H1 (cell line): ENCODE measurements at regions of chr11 and their contacts with region 1.

Region 1: DNA sequence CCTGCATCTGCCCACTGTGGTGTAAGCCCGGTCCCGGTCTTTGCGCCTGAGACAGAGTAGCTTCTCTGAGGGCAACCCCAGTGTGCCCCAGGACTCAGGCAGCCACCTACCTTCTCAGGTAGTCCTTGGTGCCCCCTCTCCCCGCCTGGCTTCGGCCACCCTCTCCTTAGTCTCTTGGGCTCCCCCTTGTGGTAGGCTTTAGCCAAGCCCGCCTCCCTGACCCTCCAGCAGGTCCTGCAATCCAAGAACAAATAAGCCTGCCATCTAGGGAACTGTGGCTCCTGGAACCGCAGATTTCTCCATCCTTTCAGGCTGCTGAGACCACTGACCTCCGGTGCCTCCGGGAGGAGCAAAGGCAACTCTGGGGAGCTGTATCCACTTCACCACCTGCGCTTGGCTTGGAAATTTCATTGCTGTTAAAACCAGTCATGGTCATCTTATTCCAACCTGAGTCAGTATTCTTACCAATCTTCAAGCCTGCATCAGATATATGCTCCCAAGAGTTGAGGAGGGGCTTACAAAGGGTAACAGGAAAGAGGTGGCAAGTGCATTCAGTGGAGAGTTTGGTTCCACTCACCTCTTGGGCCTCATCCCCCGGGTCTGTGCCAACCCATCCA is 52.8 kb upstream of the TENM4 start:
- DNase-seq: peak; percentile 92 to 98
- H3K4me3 ChIP-seq: no peak overlapping the region
- H3K27ac ChIP-seq: no peak overlapping the region
- H3K4me1 ChIP-seq: peaks cover 0 to 2% (median 0%) of the 10 kb centered on the region in 4 experiments; a peak in 1 of 7 replicates
- H3K27me3 ChIP-seq: no peaks in the 10 kb centered on the region
- CTCF ChIP-seq: peak; percentile 88 to 98 (median 96)
- EP300 ChIP-seq: peak in 1 of 2 experiments; percentile 28; a peak in 1 of 3 replicates
- POLR2A ChIP-seq: no peak
- RAD21 ChIP-seq: peak; percentile 91 to 97

Region 2: GRCh38 chr11:79440441-79441194 is 53.0 kb before region 1 on chr11 and contains the start of gene TENM4:
- CTCF ChIA-PET with region 1: interaction called, 36 read pairs
- POLR2A ChIA-PET with region 1: interaction called, 4 read pairs
- DNase-seq: peak in 1 of 2 experiments; percentile 69
- H3K4me3 ChIP-seq: peak within 1 kb of the TSS; percentile 56 to 80 (median 63)
- H3K27ac ChIP-seq: no peak within 1 kb of the TSS
- H3K4me1 ChIP-seq: peaks cover 0 to 15% (median 10%) of the 10 kb centered on the region in 4 experiments; a peak in 6 of 7 replicates
- H3K27me3 ChIP-seq: peaks cover 12 to 64% (median 54%) of the 10 kb centered on the region in 4 experiments
- CTCF ChIP-seq: peak; percentile 46 to 61 (median 56)
- EP300 ChIP-seq: no peak
- POLR2A ChIP-seq: no peak
- RAD21 ChIP-seq: peak in 1 of 2 experiments; percentile 41; a peak in 2 of 4 replicates
- total RNA-seq, gene TENM4: 7.2 and 8.8 TPM in 2 replicates

Region 3: DNA sequence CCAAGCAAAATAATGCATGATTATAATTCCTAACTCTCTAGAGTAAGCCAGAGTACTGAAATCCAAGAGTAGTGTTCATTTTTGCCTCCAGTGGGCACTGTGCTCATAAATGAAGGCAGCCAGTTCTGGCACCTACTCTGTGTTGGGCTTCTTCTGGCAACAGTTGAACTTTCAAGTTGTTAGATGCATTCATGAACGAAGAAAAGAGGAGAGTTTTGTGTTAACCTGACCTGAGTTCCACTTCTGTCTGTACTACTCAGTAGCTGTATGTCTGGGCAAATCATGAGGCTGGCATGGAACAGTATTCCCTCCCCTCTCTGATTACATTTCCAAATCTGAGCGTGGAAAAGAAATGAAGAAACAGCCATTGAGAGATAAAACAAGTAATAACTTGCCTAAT is 32.5 kb before region 1 on chr11:
- CTCF ChIA-PET with region 1: interaction called, 136 read pairs
- POLR2A ChIA-PET with region 1: interaction called, 4 read pairs
- DNase-seq: no peak
- H3K4me3 ChIP-seq: no peak overlapping the region
- H3K27ac ChIP-seq: no peak overlapping the region
- H3K4me1 ChIP-seq: no peaks in the 10 kb centered on the region
- H3K27me3 ChIP-seq: no peaks in the 10 kb centered on the region
- CTCF ChIP-seq: peak in 2 of 3 experiments; percentile 71 to 76; a peak in 3 of 4 replicates
- EP300 ChIP-seq: no peak
- POLR2A ChIP-seq: no peak
- RAD21 ChIP-seq: peak; percentile 70 to 87

Region 4: DNA sequence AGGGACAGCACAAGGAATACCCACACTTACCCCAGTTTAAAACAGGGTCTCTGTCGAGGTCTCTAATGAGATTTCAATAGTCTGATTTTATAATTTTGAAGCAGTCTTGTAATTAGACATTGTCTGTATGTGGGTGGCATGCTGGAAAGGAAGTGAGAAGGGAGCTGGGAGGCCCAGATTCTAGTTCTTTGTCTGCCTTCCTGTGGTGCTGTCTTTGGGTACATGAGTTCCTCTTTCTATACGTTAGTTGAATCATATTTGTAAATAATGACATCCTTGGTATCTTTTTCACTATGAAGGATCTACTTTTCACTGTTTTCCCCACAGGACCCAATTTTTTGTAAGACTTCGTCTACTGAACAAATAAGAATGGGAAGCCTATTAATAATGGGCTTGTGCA is 10.9 kb before region 1 on chr11:
- CTCF ChIA-PET with region 1: interaction called, 23 read pairs
- POLR2A ChIA-PET with region 1: no interaction called
- DNase-seq: no peak
- H3K4me3 ChIP-seq: no peak overlapping the region
- H3K27ac ChIP-seq: no peak overlapping the region
- H3K4me1 ChIP-seq: peaks cover 10 to 17% (median 13%) of the 10 kb centered on the region in 4 experiments
- H3K27me3 ChIP-seq: no peaks in the 10 kb centered on the region; a peak in 2 of 7 replicates
- CTCF ChIP-seq: no peak
- EP300 ChIP-seq: no peak
- POLR2A ChIP-seq: no peak
- RAD21 ChIP-seq: no peak

Region 5: DNA sequence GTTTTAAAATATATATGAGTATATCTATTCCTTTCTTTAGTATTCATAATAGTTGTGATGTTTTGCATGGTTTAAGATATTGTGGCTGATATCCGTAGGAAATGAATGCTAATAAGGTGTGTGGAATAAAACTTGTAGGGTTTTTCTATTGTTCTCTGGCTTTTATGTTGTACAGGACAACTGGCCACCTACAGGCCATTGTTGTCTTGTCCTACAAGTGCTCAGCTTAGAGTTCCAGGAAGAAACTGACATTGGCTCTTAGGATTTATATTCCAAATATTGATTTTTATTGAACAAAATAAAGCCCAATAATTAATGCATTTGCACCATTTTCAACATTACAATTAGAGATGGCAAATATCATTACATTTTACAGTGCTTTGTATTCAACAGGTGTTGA is 460.0 kb after region 1 on chr11:
- CTCF ChIA-PET with region 1: no interaction called
- POLR2A ChIA-PET with region 1: no interaction called
- DNase-seq: no peak
- H3K4me3 ChIP-seq: no peak overlapping the region
- H3K27ac ChIP-seq: no peak overlapping the region
- H3K4me1 ChIP-seq: no peaks in the 10 kb centered on the region
- H3K27me3 ChIP-seq: no peaks in the 10 kb centered on the region
- CTCF ChIP-seq: no peak
- EP300 ChIP-seq: no peak
- POLR2A ChIP-seq: no peak
- RAD21 ChIP-seq: no peak